ENCODE measurements at regions of chr15 and their contacts with region 1.

Region 1: GRCh38 chr15:83559310-83559966 is 94.5 kb upstream of the ADAMTSL3 start:
- DNase-seq: peak; percentile 57
- H3K4me3 Mint-ChIP-seq: no peak overlapping the region
- H3K27ac Mint-ChIP-seq: no peak overlapping the region
- H3K4me1 Mint-ChIP-seq: no peaks in the 10 kb centered on the region
- H3K27me3 Mint-ChIP-seq: peaks cover 10% of the 10 kb centered on the region

Region 2: DNA sequence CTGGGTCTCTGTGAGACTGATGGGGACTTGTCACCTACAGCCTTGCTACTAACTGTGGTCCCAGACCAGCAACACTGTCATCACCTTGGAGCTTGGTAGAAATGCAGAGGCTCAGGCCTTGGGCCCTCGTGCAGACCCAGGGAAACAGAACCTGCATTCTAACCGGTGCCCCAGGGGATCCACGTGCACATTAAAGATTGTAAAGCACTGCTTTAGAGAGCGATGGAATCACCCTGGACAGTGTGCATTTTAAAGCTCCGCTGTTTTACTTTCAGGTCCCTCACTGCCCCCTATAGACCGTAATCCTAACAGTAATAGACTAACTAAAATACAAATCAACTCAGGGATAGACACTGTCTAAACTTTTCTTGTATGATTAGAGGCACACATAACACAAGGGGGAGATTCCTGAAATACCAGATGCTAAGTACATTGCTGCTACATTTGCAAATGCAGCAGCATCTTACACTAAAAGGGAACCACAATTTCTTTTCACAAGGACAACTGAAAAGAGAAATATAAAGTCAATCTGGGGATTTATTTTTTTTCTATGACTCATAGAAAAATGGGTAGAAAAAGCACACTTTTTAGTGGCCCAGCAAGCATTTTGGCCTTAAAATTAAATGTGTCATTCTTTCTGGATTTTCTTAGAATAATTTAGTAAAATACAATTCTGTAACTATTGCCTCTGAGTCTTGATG is 122.8 kb before region 1 on chr15:
- CTCF ChIA-PET with region 1: interaction called, 48 read pairs
- POLR2A ChIA-PET with region 1: no interaction called
- intact Hi-C with region 1: loop called (anchors 1 kb)
- DNase-seq: no peak
- H3K4me3 Mint-ChIP-seq: no peak overlapping the region
- H3K27ac Mint-ChIP-seq: no peak overlapping the region
- H3K4me1 Mint-ChIP-seq: peaks cover 2% of the 10 kb centered on the region
- H3K27me3 Mint-ChIP-seq: peaks cover 7% of the 10 kb centered on the region

Region 3: GRCh38 chr15:83585601-83586335 is 26.3 kb after region 1 on chr15:
- CTCF ChIA-PET with region 1: no interaction called
- POLR2A ChIA-PET with region 1: no interaction called
- intact Hi-C with region 1: no loop called
- DNase-seq: no peak
- H3K4me3 Mint-ChIP-seq: no peak overlapping the region
- H3K27ac Mint-ChIP-seq: no peak overlapping the region
- H3K4me1 Mint-ChIP-seq: no peaks in the 10 kb centered on the region
- H3K27me3 Mint-ChIP-seq: no peaks in the 10 kb centered on the region